ENCODE measurements at regions of chrX and their contacts with region 1.

Region 1: DNA sequence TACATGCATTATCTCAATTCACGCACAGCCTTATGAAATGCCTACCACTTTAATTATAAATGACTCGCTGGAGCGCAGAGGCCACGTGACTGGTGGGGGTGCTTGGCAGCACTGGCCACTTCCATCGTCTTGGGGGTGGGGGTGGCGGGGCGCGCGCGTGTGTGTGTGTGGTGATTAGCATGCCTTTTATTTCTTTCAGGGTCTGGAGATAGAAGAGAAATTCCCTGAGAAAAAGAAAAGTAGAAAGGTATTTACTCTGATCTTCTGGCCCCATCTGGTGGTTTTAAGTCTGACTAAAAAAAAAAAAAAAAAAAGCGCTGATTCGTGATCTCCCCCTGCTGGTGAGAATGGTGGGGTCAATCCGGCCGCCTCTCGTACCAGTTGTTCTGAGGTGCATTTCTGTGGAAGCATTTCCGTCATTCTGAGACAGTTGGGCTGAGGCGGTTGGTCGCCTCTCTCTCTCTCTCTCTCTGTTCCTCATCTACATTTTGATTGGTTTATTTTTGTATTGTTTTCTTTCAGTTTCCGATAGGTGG is at the start of gene CCNB3:
- DNase-seq: peak; percentile 33 to 92 (median 59)

Region 2: DNA sequence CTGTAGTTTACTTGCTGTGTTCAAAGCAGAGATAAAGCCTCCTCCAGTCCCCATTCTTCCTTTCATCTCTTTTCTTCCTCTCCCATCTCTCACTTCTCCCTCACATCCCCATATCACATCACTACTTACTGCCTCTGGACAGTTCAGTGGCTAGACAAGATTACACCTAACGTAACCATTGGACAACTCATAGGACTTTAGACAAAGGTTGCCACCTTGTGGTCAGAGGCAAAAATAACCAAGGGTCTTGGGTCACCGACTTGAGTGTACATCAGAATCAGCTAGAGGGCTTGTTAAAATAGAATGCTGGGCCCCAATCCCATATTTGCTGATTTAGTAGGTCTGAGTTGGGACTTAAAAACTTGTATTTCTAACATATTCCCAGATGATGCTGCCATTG is 375.5 kb after region 1 on chrX:
- intact Hi-C with region 1: loop called (anchors 5 kb)
- DNase-seq: peak in 3 of 10 donors; percentile 4 to 33 (median 10)

Measured in posterior cingulate gyrus (tissue), 11 donors.